ENCODE measurements at regions of chr12 and their contacts with region 1.

Region 1: DNA sequence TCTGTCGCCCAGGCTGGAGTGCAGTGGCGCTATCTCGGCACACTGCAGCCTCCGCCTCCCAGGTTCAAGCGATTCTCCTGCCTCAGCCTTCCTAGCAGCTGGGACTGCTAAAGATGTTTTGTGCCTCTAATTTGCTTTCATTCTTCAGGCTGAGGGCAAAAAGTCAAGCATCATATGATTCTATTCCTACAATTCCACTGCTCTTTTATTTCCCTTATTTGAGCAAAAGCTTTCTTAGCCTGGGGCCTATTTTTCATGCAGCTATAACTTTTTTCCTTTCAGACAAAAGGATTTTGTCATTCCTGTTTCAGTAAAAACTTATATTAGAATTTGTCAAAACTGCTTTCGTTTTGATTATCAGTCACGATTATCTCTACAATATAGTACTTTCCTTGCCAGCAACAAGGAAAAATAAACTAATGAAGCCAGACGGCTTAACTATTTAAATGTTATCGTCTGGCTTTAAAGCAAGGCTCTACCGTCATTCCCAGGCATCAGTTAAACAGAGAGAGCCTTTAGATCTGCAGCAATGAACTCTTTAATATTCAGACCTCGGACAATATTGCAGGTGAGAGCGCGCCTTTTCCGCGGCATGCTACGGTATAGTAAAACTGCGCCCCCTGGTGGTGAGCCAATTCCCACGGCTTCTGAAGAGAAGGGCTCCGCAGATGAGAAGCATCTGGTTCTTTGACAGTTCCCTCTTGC is 1.4 kb upstream of the SLC2A13 start:
- DNase-seq: peak; percentile 70
- H3K4me3 ChIP-seq: peak overlapping the region; percentile 23 to 46
- H3K27ac ChIP-seq: no peak overlapping the region
- H3K4me1 ChIP-seq: peaks cover 0 to 8% of the 10 kb centered on the region in 2 experiments; a peak in 2 of 4 replicates
- H3K27me3 ChIP-seq: no peaks in the 10 kb centered on the region
- CTCF ChIP-seq: peak; percentile 95
- EP300 ChIP-seq: no peak
- RAD21 ChIP-seq: peak; percentile 79

Region 2: GRCh38 chr12:39764944-39765560 is 342.2 kb before region 1 on chr12:
- CTCF ChIA-PET with region 1: interaction called, 22 read pairs
- POLR2A ChIA-PET with region 1: no interaction called
- DNase-seq: peak; percentile 39
- H3K4me3 ChIP-seq: no peak overlapping the region
- H3K27ac ChIP-seq: no peak overlapping the region
- H3K4me1 ChIP-seq: no peaks in the 10 kb centered on the region
- H3K27me3 ChIP-seq: no peaks in the 10 kb centered on the region
- CTCF ChIP-seq: peak; percentile 79
- EP300 ChIP-seq: no peak
- RAD21 ChIP-seq: peak; percentile 94

Region 3: GRCh38 chr12:40010899-40011774 is 96.1 kb before region 1 on chr12:
- CTCF ChIA-PET with region 1: interaction called, 51 read pairs
- POLR2A ChIA-PET with region 1: no interaction called
- DNase-seq: peak; percentile 40
- H3K4me3 ChIP-seq: peak overlapping the region in 1 of 2 experiments; percentile 14; a peak in 2 of 4 replicates
- H3K27ac ChIP-seq: no peak overlapping the region
- H3K4me1 ChIP-seq: peaks cover 0 to 5% of the 10 kb centered on the region in 2 experiments; a peak in 1 of 4 replicates
- H3K27me3 ChIP-seq: no peaks in the 10 kb centered on the region
- CTCF ChIP-seq: peak; percentile 74
- EP300 ChIP-seq: no peak
- RAD21 ChIP-seq: peak; percentile 68

Region 4: DNA sequence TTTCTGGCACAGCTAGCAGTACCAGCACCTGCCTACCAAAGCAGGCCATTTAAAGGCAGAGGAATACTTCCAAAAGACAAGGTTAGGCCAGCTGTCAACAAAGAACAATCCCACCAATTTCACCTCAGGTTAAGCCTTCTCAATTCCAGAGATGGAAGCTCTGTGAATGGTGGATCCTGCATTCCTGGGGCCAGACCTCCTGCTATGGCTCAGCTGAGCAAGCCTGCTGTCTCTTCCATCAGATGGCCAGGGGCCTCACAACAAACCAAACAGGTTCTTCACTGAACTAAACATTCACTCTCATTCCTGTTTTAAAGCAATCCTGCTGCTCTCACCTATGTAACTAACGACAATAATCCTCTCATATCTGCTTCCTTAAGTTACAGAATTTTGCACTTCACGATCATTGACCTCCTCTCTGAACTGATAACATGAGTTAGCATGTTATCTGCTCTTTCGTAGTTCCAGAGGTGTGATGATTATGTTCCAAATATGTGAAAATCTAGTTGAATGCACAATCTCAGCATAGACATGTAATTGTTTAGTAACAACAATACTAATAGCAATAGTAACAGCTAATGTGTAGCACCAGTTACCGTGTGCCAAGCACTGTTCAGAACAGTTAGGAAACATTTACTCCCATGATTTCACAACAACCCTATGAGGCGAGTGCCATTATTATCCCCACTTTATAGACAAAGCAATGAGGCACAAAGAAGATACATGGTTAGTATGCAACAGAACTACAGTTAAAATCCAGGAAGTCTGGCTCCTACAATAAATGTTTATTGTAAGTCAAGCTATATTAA is 74.6 kb before region 1 on chr12:
- CTCF ChIA-PET with region 1: interaction called, 10 read pairs
- POLR2A ChIA-PET with region 1: no interaction called
- DNase-seq: no peak
- H3K4me3 ChIP-seq: no peak overlapping the region
- H3K27ac ChIP-seq: no peak overlapping the region
- H3K4me1 ChIP-seq: no peaks in the 10 kb centered on the region; a peak in 1 of 4 replicates
- H3K27me3 ChIP-seq: no peaks in the 10 kb centered on the region
- CTCF ChIP-seq: no peak
- EP300 ChIP-seq: no peak
- RAD21 ChIP-seq: no peak

Region 5: DNA sequence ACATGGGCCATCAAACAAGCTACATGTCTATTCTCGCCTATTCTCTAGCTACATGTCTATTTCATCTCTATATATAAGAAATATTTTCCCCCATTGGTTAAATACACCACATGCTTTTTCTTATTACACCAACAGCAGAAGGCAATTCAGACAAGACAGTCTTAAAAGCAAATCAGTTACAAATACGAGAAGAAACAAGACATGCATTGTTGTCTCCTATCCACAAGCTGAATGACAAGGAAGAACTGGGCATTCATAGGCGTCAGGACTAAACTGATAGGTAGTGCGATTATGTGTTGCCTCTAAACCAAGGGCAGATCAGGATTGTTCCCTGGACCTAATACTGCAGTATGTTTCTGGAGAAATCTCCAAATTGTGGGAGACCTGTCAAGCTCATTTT is 20.8 kb before region 1 on chr12:
- CTCF ChIA-PET with region 1: interaction called, 15 read pairs
- POLR2A ChIA-PET with region 1: no interaction called
- DNase-seq: no peak
- H3K4me3 ChIP-seq: no peak overlapping the region
- H3K27ac ChIP-seq: no peak overlapping the region
- H3K4me1 ChIP-seq: no peaks in the 10 kb centered on the region; a peak in 1 of 4 replicates
- H3K27me3 ChIP-seq: no peaks in the 10 kb centered on the region
- CTCF ChIP-seq: no peak
- EP300 ChIP-seq: no peak
- RAD21 ChIP-seq: no peak

Region 6: GRCh38 chr12:40117818-40118217 is 10.6 kb after region 1 on chr12:
- CTCF ChIA-PET with region 1: interaction called, 37 read pairs
- POLR2A ChIA-PET with region 1: no interaction called
- DNase-seq: no peak
- H3K4me3 ChIP-seq: no peak overlapping the region
- H3K27ac ChIP-seq: no peak overlapping the region
- H3K4me1 ChIP-seq: no peaks in the 10 kb centered on the region
- H3K27me3 ChIP-seq: no peaks in the 10 kb centered on the region
- CTCF ChIP-seq: no peak
- EP300 ChIP-seq: no peak
- RAD21 ChIP-seq: no peak

Region 7: DNA sequence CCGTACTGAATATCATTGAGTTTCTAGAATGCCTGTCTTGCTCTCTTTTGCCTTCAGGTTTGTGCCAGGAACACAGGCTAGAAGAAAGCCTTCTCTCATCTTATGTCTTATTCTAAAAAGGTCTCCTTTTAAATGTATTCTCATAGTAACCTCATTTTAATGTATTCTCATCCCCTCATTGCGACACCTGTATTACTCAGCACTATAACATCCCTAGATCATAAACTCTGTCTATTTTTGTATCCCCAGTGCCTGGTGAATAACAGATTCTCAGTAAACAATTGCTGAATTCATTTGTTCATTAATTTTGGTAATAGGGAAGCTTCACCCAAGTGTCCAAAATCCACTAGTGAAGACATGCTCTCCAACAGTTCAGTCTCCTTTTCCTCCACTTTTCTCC is 108.7 kb after region 1 on chr12:
- CTCF ChIA-PET with region 1: no interaction called
- POLR2A ChIA-PET with region 1: no interaction called
- DNase-seq: no peak
- H3K4me3 ChIP-seq: no peak overlapping the region
- H3K27ac ChIP-seq: no peak overlapping the region
- H3K4me1 ChIP-seq: no peaks in the 10 kb centered on the region
- H3K27me3 ChIP-seq: no peaks in the 10 kb centered on the region
- CTCF ChIP-seq: no peak
- EP300 ChIP-seq: no peak
- RAD21 ChIP-seq: no peak